Panc1 (cell line): ENCODE measurements at regions of chr3 and their contacts with region 1.

Region 1: DNA sequence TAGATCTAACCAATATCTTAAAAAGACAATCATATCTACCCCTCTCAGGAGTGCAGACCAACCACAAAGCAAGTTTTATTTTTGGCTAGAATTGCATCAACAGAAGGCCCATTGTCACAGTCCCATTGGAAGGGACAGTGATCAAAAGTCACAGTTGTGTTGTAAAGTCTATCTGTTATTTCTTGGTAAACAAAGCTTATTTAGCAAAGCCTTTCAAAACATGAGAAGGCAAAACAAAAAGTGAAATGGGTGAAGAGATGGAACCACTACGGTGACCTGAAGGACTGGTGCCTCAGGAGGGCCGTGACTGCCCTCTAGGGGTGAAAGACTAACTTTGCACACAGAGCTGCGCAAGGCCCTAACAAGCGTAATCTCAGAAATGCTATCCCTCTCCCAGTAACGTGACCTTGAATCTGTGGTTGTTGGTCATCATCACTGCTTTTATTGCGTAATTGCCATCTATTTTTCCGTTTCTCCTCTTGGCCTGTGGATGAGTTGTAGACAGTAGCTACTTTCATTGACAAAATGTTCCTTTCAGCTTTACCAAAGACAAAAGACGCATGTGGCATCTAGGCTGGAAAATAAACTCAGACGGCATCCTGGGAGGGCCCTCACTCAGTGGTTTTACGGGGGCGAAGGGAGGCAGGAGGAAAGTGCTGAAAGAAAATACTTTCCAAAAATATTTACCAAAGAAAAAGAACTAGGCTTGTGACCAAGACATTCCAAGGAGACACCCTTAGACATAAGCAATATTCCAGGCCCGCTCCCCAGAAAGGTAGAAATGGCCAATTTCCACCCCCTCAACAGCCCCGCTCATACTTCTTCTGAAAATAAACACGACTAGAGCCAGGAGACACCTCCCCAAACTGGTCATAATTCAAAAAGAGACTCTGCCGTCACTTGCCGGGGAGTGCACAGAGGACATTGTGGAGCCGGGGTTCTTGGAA is 79.4 kb downstream of the FRMD4B start:
- DNase-seq: peak; percentile 61
- ATAC-seq: peak; percentile 95
- H3K4me3 ChIP-seq: no peak overlapping the region
- H3K27ac ChIP-seq: no peak overlapping the region
- H3K4me1 ChIP-seq: no peaks in the 10 kb centered on the region; the same call in 1 of the 2 replicates
- H3K27me3 ChIP-seq: no peaks in the 10 kb centered on the region
- CTCF ChIP-seq: peak; percentile 86

Region 2: GRCh38 chr3:69120879-69121464 is 185.5 kb before region 1 on chr3:
- CTCF ChIA-PET with region 1: interaction called, 5 read pairs
- POLR2A ChIA-PET with region 1: no interaction called
- in situ Hi-C with region 1: no loop called
- intact Hi-C with region 1: loop called (anchors 2 kb)
- DNase-seq: peak; percentile 79
- ATAC-seq: peak; percentile 84
- H3K4me3 ChIP-seq: no peak overlapping the region
- H3K27ac ChIP-seq: no peak overlapping the region
- H3K4me1 ChIP-seq: no peaks in the 10 kb centered on the region
- H3K27me3 ChIP-seq: no peaks in the 10 kb centered on the region
- CTCF ChIP-seq: peak; percentile 83

Region 3: GRCh38 chr3:69161587-69162307 is 144.8 kb before region 1 on chr3:
- CTCF ChIA-PET with region 1: interaction called, 20 read pairs
- POLR2A ChIA-PET with region 1: no interaction called
- in situ Hi-C with region 1: no loop called
- intact Hi-C with region 1: loop called (anchors 2 kb)
- DNase-seq: peak; percentile 51
- ATAC-seq: no peak
- H3K4me3 ChIP-seq: no peak overlapping the region
- H3K27ac ChIP-seq: no peak overlapping the region
- H3K4me1 ChIP-seq: no peaks in the 10 kb centered on the region
- H3K27me3 ChIP-seq: no peaks in the 10 kb centered on the region
- CTCF ChIP-seq: peak; percentile 82

Region 4: GRCh38 chr3:69339760-69340159 is 33.2 kb after region 1 on chr3:
- CTCF ChIA-PET with region 1: interaction called, 11 read pairs
- POLR2A ChIA-PET with region 1: no interaction called
- in situ Hi-C with region 1: no loop called
- intact Hi-C with region 1: no loop called
- DNase-seq: no peak
- ATAC-seq: no peak
- H3K4me3 ChIP-seq: no peak overlapping the region
- H3K27ac ChIP-seq: no peak overlapping the region
- H3K4me1 ChIP-seq: no peaks in the 10 kb centered on the region
- H3K27me3 ChIP-seq: no peaks in the 10 kb centered on the region
- CTCF ChIP-seq: no peak

Region 5: DNA sequence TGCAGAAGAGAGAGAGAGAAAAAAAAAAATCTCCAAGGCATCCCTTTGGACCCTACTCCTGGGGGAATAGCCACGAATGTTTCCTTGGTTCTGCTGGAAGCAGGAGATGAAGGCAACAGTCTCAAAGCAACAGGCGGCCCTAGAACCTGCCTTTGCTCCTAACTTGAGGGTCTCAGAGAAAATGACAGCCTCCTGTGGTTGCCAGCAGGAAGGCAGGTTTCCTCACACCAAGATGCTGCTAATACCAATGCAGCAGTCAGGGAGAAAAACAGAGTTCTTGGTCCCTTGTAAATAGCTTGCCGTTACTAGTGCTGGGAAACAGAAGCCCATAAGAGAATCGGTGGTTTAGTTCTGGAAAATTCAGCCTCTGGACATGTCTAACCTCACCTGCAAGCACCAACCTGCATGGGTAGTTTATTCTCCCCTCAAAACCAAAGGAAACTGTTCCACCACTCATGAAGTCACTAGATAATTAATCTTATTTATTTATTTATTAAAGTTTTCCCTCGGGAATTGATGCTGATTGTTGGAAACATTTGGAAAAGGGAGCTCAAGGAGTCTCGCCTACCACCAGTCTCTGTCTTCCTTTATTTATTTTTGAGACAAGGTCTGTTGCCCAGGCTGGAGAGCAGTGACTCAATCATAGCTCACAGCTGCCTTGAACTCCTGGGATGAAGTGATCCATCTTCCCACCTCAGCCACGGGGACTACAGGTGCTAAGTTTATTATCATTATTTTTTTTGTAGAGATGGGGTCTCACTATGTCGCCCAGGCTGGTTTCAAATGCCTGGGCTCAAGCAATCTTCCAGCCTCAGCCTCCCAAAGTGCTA is 80.3 kb after region 1 on chr3:
- CTCF ChIA-PET with region 1: interaction called, 13 read pairs
- POLR2A ChIA-PET with region 1: no interaction called
- in situ Hi-C with region 1: no loop called
- intact Hi-C with region 1: no loop called
- DNase-seq: no peak
- ATAC-seq: 0 out of 2 replicates have a peak, but pooled peaks have one; percentile 42
- H3K4me3 ChIP-seq: peak overlapping the region; percentile 36 to 38; a peak in 2 of 4 replicates
- H3K27ac ChIP-seq: no peak overlapping the region
- H3K4me1 ChIP-seq: no peaks in the 10 kb centered on the region
- H3K27me3 ChIP-seq: peaks cover 12% of the 10 kb centered on the region
- CTCF ChIP-seq: no peak

Region 6: GRCh38 chr3:69425261-69425660 is 118.7 kb after region 1 on chr3:
- CTCF ChIA-PET with region 1: no interaction called
- POLR2A ChIA-PET with region 1: no interaction called
- in situ Hi-C with region 1: no loop called
- intact Hi-C with region 1: loop called (anchors 10 kb)
- DNase-seq: peak; percentile 17
- ATAC-seq: peak; percentile 78; the same call in 1 of the 2 replicates
- H3K4me3 ChIP-seq: no peak overlapping the region
- H3K27ac ChIP-seq: no peak overlapping the region
- H3K4me1 ChIP-seq: no peaks in the 10 kb centered on the region
- H3K27me3 ChIP-seq: no peaks in the 10 kb centered on the region
- CTCF ChIP-seq: peak; percentile 60

Region 7: GRCh38 chr3:69671082-69671952 is 364.8 kb after region 1 on chr3:
- CTCF ChIA-PET with region 1: no interaction called
- POLR2A ChIA-PET with region 1: no interaction called
- in situ Hi-C with region 1: no loop called
- intact Hi-C with region 1: loop called (anchors 5 kb)
- DNase-seq: no peak
- ATAC-seq: no peak
- H3K4me3 ChIP-seq: no peak overlapping the region
- H3K27ac ChIP-seq: no peak overlapping the region
- H3K4me1 ChIP-seq: no peaks in the 10 kb centered on the region
- H3K27me3 ChIP-seq: no peaks in the 10 kb centered on the region
- CTCF ChIP-seq: peak; percentile 69; the same call in 1 of the 2 replicates